Natural killer cell (primary cell): ENCODE measurements at regions of chr2 and their contacts with region 1.

Region 1: GRCh38 chr2:69914170-69914960 is 544 bp upstream of the MXD1 start:
- DNase-seq: peak; percentile 99 to 100
- ATAC-seq: peak; percentile 85 to 95 (median 87)
- H3K4me3 ChIP-seq: peak overlapping the region; percentile 76
- H3K4me3 Mint-ChIP-seq: peak overlapping the region; percentile 85
- H3K27ac ChIP-seq: peak overlapping the region; percentile 91
- H3K27ac Mint-ChIP-seq: peak overlapping the region; percentile 91 to 98
- H3K4me1 ChIP-seq: peaks cover 13% of the 10 kb centered on the region
- H3K4me1 Mint-ChIP-seq: peaks cover 25 to 32% of the 10 kb centered on the region in 2 donors
- H3K27me3 ChIP-seq: no peaks in the 10 kb centered on the region
- H3K27me3 Mint-ChIP-seq: no peaks in the 10 kb centered on the region
- CTCF ChIP-seq: no peak

Region 2: GRCh38 chr2:70069049-70069448 is 154.7 kb after region 1 on chr2:
- intact Hi-C with region 1: loop called (anchors 1 kb)
- DNase-seq: peak; percentile 58 to 93
- ATAC-seq: peak; percentile 84 to 93 (median 84)
- H3K4me3 ChIP-seq: no peak overlapping the region
- H3K4me3 Mint-ChIP-seq: peak overlapping the region; percentile 47
- H3K27ac ChIP-seq: peak overlapping the region; percentile 87
- H3K27ac Mint-ChIP-seq: peak overlapping the region; percentile 88 to 94
- H3K4me1 ChIP-seq: peaks cover 31% of the 10 kb centered on the region
- H3K4me1 Mint-ChIP-seq: peaks cover 31 to 35% of the 10 kb centered on the region in 2 donors
- H3K27me3 ChIP-seq: no peaks in the 10 kb centered on the region
- H3K27me3 Mint-ChIP-seq: no peaks in the 10 kb centered on the region
- CTCF ChIP-seq: no peak

Region 3: GRCh38 chr2:70190418-70191243 is 276.3 kb after region 1 on chr2 and contains the start of gene C2orf42:
- intact Hi-C with region 1: loop called (anchors 1 kb)
- DNase-seq: peak; percentile 94 to 98
- ATAC-seq: peak; percentile 84 to 96 (median 88)
- H3K4me3 ChIP-seq: peak within 1 kb of the TSS; percentile 78
- H3K4me3 Mint-ChIP-seq: peak within 1 kb of the TSS; percentile 100
- H3K27ac ChIP-seq: peak within 1 kb of the TSS; percentile 90
- H3K27ac Mint-ChIP-seq: peak within 1 kb of the TSS; percentile 96 to 98
- H3K4me1 ChIP-seq: peaks cover 9% of the 10 kb centered on the region
- H3K4me1 Mint-ChIP-seq: peaks cover 16 to 19% of the 10 kb centered on the region in 2 donors
- H3K27me3 ChIP-seq: no peaks in the 10 kb centered on the region
- H3K27me3 Mint-ChIP-seq: no peaks in the 10 kb centered on the region
- CTCF ChIP-seq: no peak
- total RNA-seq, gene C2orf42: 22.7 to 31.5 (median 25.7) TPM

Region 4: GRCh38 chr2:70301344-70302194 is 387.2 kb after region 1 on chr2 and contains the start of gene FAM136A:
- intact Hi-C with region 1: loop called (anchors 5 kb)
- DNase-seq: peak; percentile 88 to 92
- ATAC-seq: peak; percentile 94 to 98 (median 94)
- H3K4me3 ChIP-seq: peak within 1 kb of the TSS; percentile 85
- H3K4me3 Mint-ChIP-seq: peak within 1 kb of the TSS; percentile 95
- H3K27ac ChIP-seq: peak within 1 kb of the TSS; percentile 69
- H3K27ac Mint-ChIP-seq: peak within 1 kb of the TSS; percentile 79 to 83
- H3K4me1 ChIP-seq: peaks cover 18% of the 10 kb centered on the region
- H3K4me1 Mint-ChIP-seq: peaks cover 19 to 23% of the 10 kb centered on the region in 2 donors
- H3K27me3 ChIP-seq: no peaks in the 10 kb centered on the region
- H3K27me3 Mint-ChIP-seq: no peaks in the 10 kb centered on the region
- CTCF ChIP-seq: peak; percentile 76
- total RNA-seq, gene FAM136A: 32.5 to 38.3 (median 36.6) TPM